ENCODE measurements at regions of chr11 and their contacts with region 1.

Region 1: GRCh38 chr11:1943977-1944376 is 3.2 kb upstream of the MRPL23 start:
- DNase-seq: peak in 4 of 7 donors; percentile 6 to 17 (median 10)
- H3K4me3 ChIP-seq: no peak overlapping the region
- H3K27ac ChIP-seq: no peak overlapping the region
- H3K4me1 ChIP-seq: no peaks in the 10 kb centered on the region
- H3K27me3 ChIP-seq: no peaks in the 10 kb centered on the region
- CTCF ChIP-seq: no peak
- POLR2A ChIP-seq: no peak

Region 2: DNA sequence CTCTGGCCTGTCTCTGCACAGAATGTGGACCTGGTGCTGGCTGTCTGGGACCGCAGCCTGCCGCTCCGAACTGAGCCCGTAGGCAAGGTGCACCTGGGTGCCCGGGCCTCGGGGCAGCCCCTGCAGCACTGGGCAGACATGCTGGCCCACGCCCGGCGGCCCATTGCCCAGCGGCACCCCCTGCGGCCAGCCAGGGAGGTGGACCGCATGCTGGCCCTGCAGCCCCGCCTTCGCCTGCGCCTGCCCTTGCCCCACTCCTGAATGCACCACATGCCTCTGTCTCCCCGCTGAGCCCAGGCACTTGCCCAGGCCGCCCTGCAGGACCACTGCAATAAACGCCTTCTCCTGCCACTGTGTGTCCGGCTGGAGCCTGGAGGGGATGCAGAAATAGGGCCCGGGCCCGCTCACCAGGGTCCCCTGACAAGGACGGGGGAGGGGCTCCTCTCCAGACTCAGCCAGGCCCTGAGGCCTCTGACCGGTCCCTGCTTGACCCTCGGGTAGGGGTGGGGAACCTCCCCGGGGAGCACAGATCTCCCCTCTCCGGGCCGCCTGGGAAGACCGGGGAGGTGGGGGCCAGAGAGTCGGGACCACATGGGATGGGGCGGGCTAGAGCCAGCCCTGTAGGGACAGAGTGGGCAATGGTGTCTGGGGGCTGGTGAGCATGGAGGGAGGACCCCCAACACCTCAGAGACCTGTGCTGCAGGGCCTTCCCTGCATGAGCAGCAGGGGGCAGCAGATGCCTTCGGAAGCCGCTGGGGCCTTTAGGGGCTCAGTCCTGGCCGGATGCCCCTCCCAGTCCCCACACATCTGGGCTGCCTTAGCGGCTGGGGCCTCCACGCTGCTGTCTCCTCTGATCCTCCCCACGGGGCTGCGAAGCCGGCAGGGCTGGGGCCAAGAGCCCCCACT is 106.6 kb before region 1 on chr11:
- intact Hi-C with region 1: loop called (anchors 5 kb)
- DNase-seq: peak; percentile 70 to 83 (median 77)
- H3K4me3 ChIP-seq: no peak overlapping the region
- H3K27ac ChIP-seq: peak overlapping the region in 2 of 5 donors; percentile 30 to 62
- H3K4me1 ChIP-seq: peaks cover 19 to 20% of the 10 kb centered on the region in 2 donors
- H3K27me3 ChIP-seq: no peaks in the 10 kb centered on the region
- CTCF ChIP-seq: peak; percentile 84 to 97 (median 92)
- POLR2A ChIP-seq: no peak

Region 3: GRCh38 chr11:1889224-1890120 is 54.5 kb before region 1 on chr11:
- intact Hi-C with region 1: loop called in 1 of 2 experiments (anchors 10 kb)
- DNase-seq: peak; percentile 34 to 54 (median 38)
- H3K4me3 ChIP-seq: no peak overlapping the region
- H3K27ac ChIP-seq: peak overlapping the region in 2 of 5 donors; percentile 26 to 62
- H3K4me1 ChIP-seq: no peaks in the 10 kb centered on the region
- H3K27me3 ChIP-seq: no peaks in the 10 kb centered on the region
- CTCF ChIP-seq: no peak
- POLR2A ChIP-seq: no peak

Region 4: DNA sequence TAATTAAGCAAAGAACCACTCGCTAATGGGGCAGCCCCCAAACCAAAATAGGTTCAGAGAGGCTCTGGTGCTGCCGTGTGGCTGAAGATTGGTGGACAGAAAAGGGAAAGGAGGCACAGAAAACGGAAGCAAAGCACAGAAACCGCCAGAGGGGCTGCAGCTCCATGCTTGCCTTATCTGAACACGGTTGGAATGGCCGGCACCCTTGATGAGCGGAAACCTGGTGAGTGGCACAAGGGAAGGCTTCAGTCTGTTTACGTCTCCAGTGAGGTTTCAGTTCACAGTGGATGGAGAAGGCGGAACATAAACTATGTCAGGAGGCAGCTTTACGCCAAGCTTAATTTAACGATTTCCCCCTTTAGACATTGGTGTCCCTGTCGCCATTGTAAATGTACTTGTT is 47.1 kb before region 1 on chr11:
- intact Hi-C with region 1: loop called (anchors 5 to 10 kb)
- DNase-seq: no peak
- H3K4me3 ChIP-seq: no peak overlapping the region
- H3K27ac ChIP-seq: no peak overlapping the region
- H3K4me1 ChIP-seq: no peaks in the 10 kb centered on the region
- H3K27me3 ChIP-seq: no peaks in the 10 kb centered on the region
- CTCF ChIP-seq: no peak
- POLR2A ChIP-seq: no peak

Region 5: GRCh38 chr11:1988667-1989317 is 44.8 kb after region 1 on chr11:
- intact Hi-C with region 1: no loop called
- DNase-seq: peak in 5 of 7 donors; percentile 10 to 60 (median 25)
- H3K4me3 ChIP-seq: no peak overlapping the region
- H3K27ac ChIP-seq: peak overlapping the region in 1 of 5 donors; percentile 73
- H3K4me1 ChIP-seq: no peaks in the 10 kb centered on the region
- H3K27me3 ChIP-seq: no peaks in the 10 kb centered on the region
- CTCF ChIP-seq: no peak
- POLR2A ChIP-seq: no peak

Region 6: DNA sequence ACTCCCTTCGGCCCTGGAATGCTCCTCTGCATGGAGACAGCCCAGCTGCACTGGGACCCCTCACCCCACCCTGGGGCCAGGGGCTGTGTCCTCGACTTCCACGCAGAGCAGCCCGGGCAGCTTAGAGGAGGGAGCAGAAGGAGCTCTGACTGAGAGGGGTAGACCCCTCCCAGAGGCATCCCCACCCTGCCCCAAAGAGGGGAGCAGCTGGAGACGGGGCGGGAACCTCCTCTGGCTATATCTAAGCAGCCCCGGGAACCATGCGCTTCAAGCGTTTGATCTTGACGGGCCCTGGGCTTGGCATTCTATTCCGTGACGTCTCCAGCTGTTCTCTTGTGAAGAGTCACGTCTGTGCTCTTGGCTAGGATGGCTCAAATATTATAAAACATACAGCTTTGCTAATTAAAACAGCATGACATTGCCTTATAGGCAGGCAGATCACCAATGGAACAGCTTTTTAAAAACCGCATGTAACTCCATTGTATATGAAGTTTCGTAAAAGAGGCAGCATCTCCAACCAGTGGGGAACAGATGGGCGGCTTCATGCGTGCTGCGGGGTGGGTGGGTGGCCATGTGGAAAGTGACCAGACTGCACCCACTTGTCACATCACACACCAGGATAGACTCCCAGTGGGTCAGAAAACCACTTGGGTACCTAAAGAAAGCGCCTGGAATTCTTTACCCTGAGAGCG is 508.5 kb after region 1 on chr11:
- intact Hi-C with region 1: no loop called
- DNase-seq: no peak
- H3K4me3 ChIP-seq: no peak overlapping the region
- H3K27ac ChIP-seq: peak overlapping the region in 2 of 5 donors; percentile 49 to 91
- H3K4me1 ChIP-seq: peaks cover 23 to 25% of the 10 kb centered on the region in 2 donors
- H3K27me3 ChIP-seq: no peaks in the 10 kb centered on the region
- CTCF ChIP-seq: no peak
- POLR2A ChIP-seq: no peak